B cell (primary cell): ENCODE measurements at regions of chr15 and their contacts with region 1.

Region 1: DNA sequence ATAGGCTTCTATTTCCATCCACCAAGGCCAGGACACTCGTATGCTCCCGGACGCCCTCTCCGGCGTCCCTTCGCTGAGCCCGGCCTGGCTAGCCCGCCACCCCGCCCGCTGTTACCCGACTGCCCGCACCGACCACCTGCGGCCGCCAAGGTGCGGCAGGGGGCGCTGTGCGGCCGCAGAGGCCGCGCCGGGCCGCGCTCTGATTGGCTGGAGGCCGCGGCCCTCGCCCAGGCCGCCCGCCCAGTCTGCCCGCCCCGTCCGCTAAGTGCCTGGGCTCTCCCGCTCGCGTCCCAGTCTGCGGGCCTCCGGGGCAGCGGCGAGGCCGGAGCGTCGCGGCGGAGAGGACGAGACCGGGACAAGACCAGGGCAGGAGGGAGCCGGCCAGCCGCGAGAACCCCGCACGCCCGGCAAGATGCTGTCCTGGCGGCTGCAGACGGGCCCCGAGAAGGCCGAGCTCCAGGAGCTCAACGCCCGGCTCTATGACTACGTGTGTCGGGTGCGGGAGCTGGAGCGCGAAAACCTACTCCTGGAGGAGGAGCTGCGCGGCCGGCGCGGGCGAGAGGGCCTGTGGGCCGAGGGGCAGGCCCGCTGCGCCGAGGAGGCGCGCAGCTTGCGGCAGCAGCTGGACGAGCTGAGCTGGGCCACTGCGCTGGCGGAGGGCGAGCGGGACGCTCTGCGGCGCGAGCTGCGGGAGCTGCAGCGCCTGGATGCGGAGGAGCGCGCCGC is at the start of gene SYNM:
- DNase-seq: peak; percentile 55
- ATAC-seq: peak; percentile 73
- H3K4me3 ChIP-seq: peak within 1 kb of the TSS in 2 of 5 experiments; percentile 36 to 40
- H3K4me3 Mint-ChIP-seq: peak within 1 kb of the TSS; percentile 70
- H3K27ac ChIP-seq: no peak within 1 kb of the TSS
- H3K27ac Mint-ChIP-seq: no peak within 1 kb of the TSS
- H3K4me1 ChIP-seq: peaks cover 12 to 14% of the 10 kb centered on the region in 2 donors
- H3K4me1 Mint-ChIP-seq: peaks cover 18% of the 10 kb centered on the region
- H3K27me3 ChIP-seq: peaks cover 0 to 44% (median 22%) of the 10 kb centered on the region in 4 experiments
- H3K27me3 Mint-ChIP-seq: peaks cover 50% of the 10 kb centered on the region
- CTCF ChIP-seq: peak; percentile 48
- total RNA-seq, gene SYNM: 0.27 and 0.36 TPM in 2 replicates

Region 2: GRCh38 chr15:99213187-99213811 is 108.3 kb after region 1 on chr15:
- CTCF ChIA-PET with region 1: interaction called, 9 read pairs
- POLR2A ChIA-PET with region 1: no interaction called
- intact Hi-C with region 1: loop called (anchors 1 kb)
- DNase-seq: peak; percentile 50
- ATAC-seq: peak; percentile 61
- H3K4me3 ChIP-seq: no peak overlapping the region
- H3K4me3 Mint-ChIP-seq: no peak overlapping the region
- H3K27ac ChIP-seq: no peak overlapping the region
- H3K27ac Mint-ChIP-seq: no peak overlapping the region
- H3K4me1 ChIP-seq: no peaks in the 10 kb centered on the region
- H3K4me1 Mint-ChIP-seq: no peaks in the 10 kb centered on the region
- H3K27me3 ChIP-seq: no peaks in the 10 kb centered on the region
- H3K27me3 Mint-ChIP-seq: no peaks in the 10 kb centered on the region
- CTCF ChIP-seq: peak; percentile 89

Region 3: DNA sequence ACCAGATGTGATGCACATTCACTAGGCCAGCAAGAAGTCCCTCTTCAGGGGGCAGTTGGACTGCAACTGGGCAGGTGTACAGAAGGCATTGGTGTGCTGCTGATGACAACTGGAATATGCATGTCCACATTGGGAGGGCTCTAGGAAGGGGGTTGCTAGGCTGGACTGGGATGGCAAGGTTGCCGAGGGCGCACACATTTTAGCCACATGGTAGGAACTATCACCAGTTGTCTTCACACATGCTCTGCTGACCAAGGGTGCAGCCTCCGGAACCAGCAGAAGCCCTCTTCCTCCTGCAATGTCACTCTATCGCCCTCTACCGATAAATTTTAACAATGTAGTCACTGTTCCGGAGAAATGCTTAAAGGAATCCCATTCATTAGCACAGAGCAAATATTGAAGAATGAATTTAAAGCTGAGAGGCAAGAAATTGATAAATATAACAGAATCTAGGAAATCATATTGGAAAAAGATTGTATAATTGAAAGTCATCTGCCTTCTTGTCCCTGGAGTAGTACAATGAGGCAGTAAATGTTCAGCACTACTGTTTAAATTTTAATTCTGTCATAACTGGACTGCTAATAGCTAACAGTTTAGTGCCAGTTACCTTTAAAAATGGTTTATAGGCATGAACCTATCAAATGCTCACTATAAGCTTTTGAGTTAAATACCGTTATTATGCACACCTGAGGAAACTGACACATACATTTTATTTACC is 650.9 kb after region 1 on chr15:
- CTCF ChIA-PET with region 1: interaction called, 6 read pairs
- POLR2A ChIA-PET with region 1: no interaction called
- intact Hi-C with region 1: loop called (anchors 10 kb)
- DNase-seq: peak; percentile 82
- ATAC-seq: peak; percentile 92
- H3K4me3 ChIP-seq: no peak overlapping the region
- H3K4me3 Mint-ChIP-seq: no peak overlapping the region
- H3K27ac ChIP-seq: no peak overlapping the region
- H3K27ac Mint-ChIP-seq: no peak overlapping the region
- H3K4me1 ChIP-seq: peaks cover 5 to 6% of the 10 kb centered on the region in 2 donors
- H3K4me1 Mint-ChIP-seq: peaks cover 7% of the 10 kb centered on the region
- H3K27me3 ChIP-seq: no peaks in the 10 kb centered on the region
- H3K27me3 Mint-ChIP-seq: peaks cover 3% of the 10 kb centered on the region
- CTCF ChIP-seq: peak; percentile 96